ENCODE measurements at regions of chr3 and their contacts with region 1.

Region 1: GRCh38 chr3:4584456-4585249 is 91.5 kb downstream of the ITPR1 start:
- DNase-seq: peak in 3 of 5 donors; percentile 31 to 49 (median 46)
- ATAC-seq: peak in 2 of 4 donors; percentile 10 to 36
- H3K4me3 ChIP-seq: peak overlapping the region in 11 of 12 donors; percentile 7 to 45 (median 33)
- H3K27ac ChIP-seq: peak overlapping the region; percentile 40 to 84 (median 77)
- H3K4me1 ChIP-seq: peaks cover 0 to 83% (median 67%) of the 10 kb centered on the region in 12 donors
- H3K27me3 ChIP-seq: no peaks in the 10 kb centered on the region
- CTCF ChIP-seq: peak in 10 of 12 donors; percentile 5 to 56 (median 38)
- POLR2A ChIP-seq: no peak

Region 2: DNA sequence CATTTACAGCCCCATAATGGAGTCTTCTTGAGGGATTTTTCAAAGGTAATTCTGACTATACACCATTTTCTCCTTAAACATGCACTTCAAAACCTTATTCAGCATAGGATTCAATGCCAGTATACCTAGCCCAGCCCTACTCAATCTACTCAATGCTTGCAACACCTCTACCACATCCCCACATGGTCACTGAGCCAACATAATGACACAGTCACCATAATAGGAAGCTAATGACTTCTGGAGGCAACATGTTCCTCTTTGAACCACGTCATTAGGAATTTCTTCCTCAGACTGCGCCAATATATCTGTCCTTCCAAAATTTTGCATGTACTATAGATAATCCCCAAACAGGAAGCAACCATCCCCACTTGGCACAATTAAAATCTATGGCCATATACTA is 435.4 kb before region 1 on chr3:
- intact Hi-C with region 1: no loop called
- DNase-seq: no peak
- ATAC-seq: no peak
- H3K4me3 ChIP-seq: no peak overlapping the region
- H3K27ac ChIP-seq: no peak overlapping the region
- H3K4me1 ChIP-seq: no peaks in the 10 kb centered on the region
- H3K27me3 ChIP-seq: no peaks in the 10 kb centered on the region
- CTCF ChIP-seq: no peak
- POLR2A ChIP-seq: no peak

Region 3: DNA sequence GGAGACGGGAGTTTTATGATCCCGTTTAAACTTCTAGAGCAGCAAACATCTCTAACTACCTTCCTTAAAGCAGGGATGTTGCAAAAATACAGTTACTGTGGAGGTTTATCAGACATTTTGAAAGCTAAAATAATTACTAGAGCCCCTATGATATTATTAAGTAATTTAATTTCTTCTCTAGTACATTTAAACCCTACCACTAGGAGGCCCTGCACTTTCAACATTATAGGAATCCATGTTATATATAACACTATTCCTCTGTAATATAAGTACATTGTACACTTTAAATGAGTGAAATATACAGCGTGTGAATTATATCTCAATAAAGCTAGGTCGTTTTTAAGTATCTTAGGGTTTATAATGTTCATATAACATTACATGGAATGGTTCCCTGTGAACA is 270.0 kb before region 1 on chr3:
- intact Hi-C with region 1: no loop called
- DNase-seq: no peak
- ATAC-seq: no peak
- H3K4me3 ChIP-seq: no peak overlapping the region
- H3K27ac ChIP-seq: no peak overlapping the region
- H3K4me1 ChIP-seq: peaks cover 0 to 15% (median 9%) of the 10 kb centered on the region in 12 donors
- H3K27me3 ChIP-seq: no peaks in the 10 kb centered on the region
- CTCF ChIP-seq: peak in 5 of 12 donors; percentile 6 to 15 (median 13)
- POLR2A ChIP-seq: no peak

Region 4: GRCh38 chr3:4474683-4475490 is 109.8 kb before region 1 on chr3:
- intact Hi-C with region 1: loop called in 1 of 10 experiments (anchors 5 kb)
- DNase-seq: peak in 4 of 5 donors; percentile 53 to 68 (median 61)
- ATAC-seq: peak; percentile 53 to 93 (median 91)
- H3K4me3 ChIP-seq: peak overlapping the region in 1 of 12 donors; percentile 36
- H3K27ac ChIP-seq: peak overlapping the region in 10 of 12 donors; percentile 24 to 87 (median 46)
- H3K4me1 ChIP-seq: peaks cover 0 to 45% (median 3%) of the 10 kb centered on the region in 12 donors
- H3K27me3 ChIP-seq: no peaks in the 10 kb centered on the region
- CTCF ChIP-seq: no peak
- POLR2A ChIP-seq: no peak

Region 5: DNA sequence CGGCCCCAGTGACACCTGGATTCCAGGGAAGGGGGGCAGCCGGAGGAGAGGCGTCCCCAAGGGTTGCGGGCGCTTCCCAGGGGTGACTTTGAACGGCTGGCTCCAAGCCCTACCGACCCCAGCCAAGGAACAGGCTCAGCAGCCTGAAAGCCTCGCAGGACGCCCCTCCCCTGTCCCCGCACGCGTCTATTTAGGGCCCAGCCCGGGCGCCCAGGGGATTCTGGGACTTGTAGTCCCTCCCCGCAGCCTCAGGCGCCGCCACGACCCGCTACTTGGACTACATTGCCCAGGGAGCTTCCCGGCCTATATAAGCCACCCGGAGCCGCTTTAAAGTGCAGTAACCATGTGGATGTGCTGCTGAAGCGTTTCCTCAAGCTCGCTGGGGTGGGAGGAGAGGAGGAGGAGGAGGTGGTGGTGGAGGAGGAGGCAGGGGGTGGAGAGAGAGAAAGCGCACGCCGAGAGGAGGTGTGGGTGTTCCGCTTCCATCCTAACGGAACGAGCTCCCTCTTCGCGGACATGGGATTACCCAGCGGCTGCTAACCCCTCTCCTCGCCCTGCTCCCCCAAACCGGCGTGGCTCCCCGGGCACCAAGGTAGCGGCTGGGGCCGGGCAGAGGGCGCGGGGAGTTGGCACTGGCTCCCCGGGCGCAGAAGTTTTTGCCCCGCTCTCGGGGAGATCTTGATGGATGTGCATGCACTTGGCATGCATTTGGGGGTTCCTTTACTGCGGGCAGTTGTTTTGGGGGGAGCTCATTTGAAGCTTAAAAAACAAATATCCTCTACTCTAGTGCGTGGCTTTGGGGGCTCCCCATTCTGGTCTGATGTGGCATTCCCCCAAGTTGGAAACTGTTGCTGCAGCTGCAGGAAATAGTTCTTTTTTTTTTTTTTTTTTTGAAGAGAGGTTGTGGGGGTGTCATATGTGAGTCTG is 91.4 kb before region 1 on chr3 and contains the start of gene ITPR1:
- intact Hi-C with region 1: loop called in 8 of 10 experiments (anchors 5 to 10 kb)
- DNase-seq: peak; percentile 98 to 99 (median 99)
- ATAC-seq: peak; percentile 98 to 99 (median 99)
- H3K4me3 ChIP-seq: peak within 1 kb of the TSS; percentile 59 to 96 (median 78)
- H3K27ac ChIP-seq: peak within 1 kb of the TSS; percentile 68 to 97 (median 87)
- H3K4me1 ChIP-seq: peaks cover 0 to 50% (median 26%) of the 10 kb centered on the region in 12 donors
- H3K27me3 ChIP-seq: no peaks in the 10 kb centered on the region
- CTCF ChIP-seq: no peak
- POLR2A ChIP-seq: peak; percentile 90 to 99
- total RNA-seq, gene ITPR1: 16.5 to 55.8 (median 20.1) TPM

Region 6: GRCh38 chr3:4533489-4534443 is 50.9 kb before region 1 on chr3:
- intact Hi-C with region 1: loop called in 2 of 10 experiments (anchors 5 to 10 kb)
- DNase-seq: peak in 1 of 5 donors; percentile 48
- ATAC-seq: peak in 3 of 4 donors; percentile 31 to 43 (median 37)
- H3K4me3 ChIP-seq: peak overlapping the region in 1 of 12 donors; percentile 4
- H3K27ac ChIP-seq: peak overlapping the region in 9 of 12 donors; percentile 14 to 71 (median 62)
- H3K4me1 ChIP-seq: peaks cover 0 to 69% (median 31%) of the 10 kb centered on the region in 12 donors
- H3K27me3 ChIP-seq: no peaks in the 10 kb centered on the region
- CTCF ChIP-seq: no peak
- POLR2A ChIP-seq: no peak